T-cell (primary cell): ENCODE measurements at regions of chr18 and their contacts with region 1.

Region 1: DNA sequence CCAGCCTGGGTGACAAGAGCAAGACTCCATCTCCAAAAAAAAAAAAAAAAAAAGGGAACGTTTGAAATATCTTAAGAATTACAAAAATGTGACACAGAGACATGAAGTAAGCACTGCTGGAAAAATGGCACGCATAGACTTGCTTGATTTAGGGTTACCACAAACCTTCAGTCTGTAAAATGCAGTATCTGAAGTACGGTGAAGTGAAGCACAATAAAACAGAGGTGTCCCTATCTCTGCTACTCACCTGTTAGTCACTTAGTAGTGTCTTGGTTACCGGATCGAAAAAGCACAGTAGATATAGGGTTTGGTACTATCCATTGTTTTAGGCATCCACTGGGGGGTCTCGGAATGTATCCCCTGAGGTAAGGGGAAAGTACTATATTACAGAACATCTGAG is 11.6 kb upstream of the GREB1L start:
- DNase-seq: no peak
- ATAC-seq: no peak
- H3K4me3 ChIP-seq: no peak overlapping the region
- H3K4me3 Mint-ChIP-seq: no peak overlapping the region
- H3K27ac ChIP-seq: no peak overlapping the region
- H3K27ac Mint-ChIP-seq: no peak overlapping the region
- H3K4me1 ChIP-seq: no peaks in the 10 kb centered on the region
- H3K4me1 Mint-ChIP-seq: no peaks in the 10 kb centered on the region
- H3K27me3 ChIP-seq: peaks cover 2 to 4% of the 10 kb centered on the region in 2 experiments
- H3K27me3 Mint-ChIP-seq: peaks cover 3% of the 10 kb centered on the region in 2 donors

Region 2: DNA sequence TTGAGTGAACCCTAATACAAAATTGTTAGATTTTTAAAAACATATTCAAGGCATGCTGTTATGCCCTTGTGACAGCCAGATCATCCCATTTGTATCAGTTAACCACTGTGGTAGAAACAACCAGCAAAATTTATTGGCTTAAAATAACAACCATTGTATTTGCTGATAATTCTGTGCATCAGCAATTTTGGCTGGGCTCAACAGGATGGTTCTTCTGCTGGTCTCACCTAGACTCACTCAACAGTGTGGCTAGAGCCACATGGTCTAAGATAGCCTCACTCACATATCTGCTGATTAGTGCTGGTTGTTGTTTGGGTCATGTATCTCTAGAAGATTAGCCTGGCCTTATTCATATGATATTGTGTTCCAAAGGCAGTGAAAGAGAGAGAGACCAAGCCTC is 778.8 kb after region 1 on chr18:
- CTCF ChIA-PET with region 1: interaction called in 1 of 2 experiments, 15 read pairs
- POLR2A ChIA-PET with region 1: no interaction called
- DNase-seq: no peak
- ATAC-seq: no peak
- H3K4me3 ChIP-seq: no peak overlapping the region
- H3K4me3 Mint-ChIP-seq: no peak overlapping the region
- H3K27ac ChIP-seq: no peak overlapping the region
- H3K27ac Mint-ChIP-seq: no peak overlapping the region
- H3K4me1 ChIP-seq: no peaks in the 10 kb centered on the region
- H3K4me1 Mint-ChIP-seq: no peaks in the 10 kb centered on the region
- H3K27me3 ChIP-seq: no peaks in the 10 kb centered on the region
- H3K27me3 Mint-ChIP-seq: peaks cover 0 to 8% of the 10 kb centered on the region in 2 donors